ENCODE measurements at regions of chr1 and their contacts with region 1.

Region 1: DNA sequence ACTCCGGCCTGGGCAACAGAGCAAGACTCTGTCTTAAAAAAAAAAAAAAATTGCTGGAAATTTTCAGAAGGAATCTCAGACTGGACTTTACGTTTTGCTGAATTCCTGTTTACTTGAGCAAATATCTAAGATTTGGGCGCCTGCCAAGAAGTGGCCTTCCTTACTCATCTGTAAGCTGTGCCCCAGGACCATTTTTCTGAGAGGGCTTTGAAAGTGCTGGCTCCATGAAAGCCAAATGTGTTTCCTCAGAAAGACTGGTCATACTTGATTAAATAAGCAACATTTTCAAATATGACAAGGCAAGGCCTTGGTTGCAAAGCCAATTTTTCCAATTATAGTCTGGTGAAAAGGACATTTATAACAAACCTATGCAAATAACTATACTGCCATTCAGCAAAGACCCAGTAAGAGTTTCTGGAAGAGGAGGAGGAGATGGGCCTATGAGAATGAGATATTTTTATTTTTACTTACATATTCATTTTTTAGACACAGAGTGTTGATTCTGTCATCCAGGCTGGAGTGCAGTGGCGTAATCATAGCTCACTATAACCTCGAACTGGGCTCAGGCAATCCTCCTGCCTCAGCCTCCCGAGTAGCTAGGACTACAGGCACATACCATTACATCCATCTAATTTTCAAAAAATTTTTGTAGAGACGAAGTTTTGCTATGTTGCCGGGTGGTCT is 56.3 kb upstream of the HTR1D start:
- DNase-seq: no peak
- ATAC-seq: no peak
- H3K4me3 ChIP-seq: no peak overlapping the region
- H3K27ac ChIP-seq: no peak overlapping the region
- H3K4me1 ChIP-seq: no peaks in the 10 kb centered on the region
- H3K27me3 ChIP-seq: peaks cover 0 to 2% (median 0%) of the 10 kb centered on the region in 9 donors
- CTCF ChIP-seq: no peak
- POLR2A ChIP-seq: no peak

Region 2: DNA sequence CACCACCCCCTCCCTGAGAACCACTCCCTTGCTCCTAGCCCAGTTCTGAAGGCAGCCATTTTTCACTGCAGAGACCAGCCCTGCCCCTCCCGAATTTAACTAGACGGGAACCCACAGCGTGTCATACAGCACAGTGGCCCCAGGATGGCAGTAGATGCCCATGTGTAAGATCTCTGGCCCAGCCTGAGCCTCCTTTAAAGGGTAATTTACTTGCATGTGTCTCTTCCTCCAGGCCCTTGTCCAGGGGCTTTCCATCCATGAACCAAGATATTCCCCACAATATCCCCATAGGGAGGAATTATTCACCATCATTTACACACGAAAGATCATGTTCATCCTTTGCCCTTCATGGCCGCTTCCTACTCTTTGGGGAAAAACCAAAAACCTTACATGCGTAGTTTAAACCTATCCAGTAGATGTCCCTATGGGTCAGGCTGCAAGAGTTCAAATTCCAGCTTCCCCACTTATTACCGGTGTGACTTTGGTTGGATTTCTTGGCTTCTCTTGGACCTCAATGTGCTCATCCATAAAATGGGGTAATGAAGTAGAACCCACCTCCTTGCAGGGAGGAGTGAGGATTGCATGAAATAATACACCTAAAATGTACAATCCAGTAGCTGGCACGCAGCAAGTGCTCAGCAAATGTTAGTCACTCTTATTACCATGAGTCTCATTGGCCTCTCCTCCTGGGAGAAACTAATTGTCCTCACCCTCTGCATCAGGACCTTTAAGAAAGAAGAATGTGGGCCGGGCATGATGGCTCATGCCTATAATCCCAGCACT is 296.9 kb before region 1 on chr1:
- intact Hi-C with region 1: loop called in 5 of 10 experiments (anchors 10 kb)
- DNase-seq: peak in 4 of 5 donors; percentile 35 to 55 (median 47)
- ATAC-seq: peak; percentile 79 to 96 (median 94)
- H3K4me3 ChIP-seq: no peak overlapping the region
- H3K27ac ChIP-seq: no peak overlapping the region
- H3K4me1 ChIP-seq: no peaks in the 10 kb centered on the region
- H3K27me3 ChIP-seq: peaks cover 0 to 16% (median 6%) of the 10 kb centered on the region in 9 donors
- CTCF ChIP-seq: peak; percentile 37 to 68 (median 64)
- POLR2A ChIP-seq: no peak

Region 3: GRCh38 chr1:22983934-22984333 is 289.7 kb before region 1 on chr1:
- intact Hi-C with region 1: loop called in 5 of 10 experiments (anchors 10 kb)
- DNase-seq: no peak
- ATAC-seq: no peak
- H3K4me3 ChIP-seq: no peak overlapping the region
- H3K27ac ChIP-seq: no peak overlapping the region
- H3K4me1 ChIP-seq: no peaks in the 10 kb centered on the region
- H3K27me3 ChIP-seq: peaks cover 0 to 4% (median 0%) of the 10 kb centered on the region in 9 donors
- CTCF ChIP-seq: no peak
- POLR2A ChIP-seq: no peak

Region 4: DNA sequence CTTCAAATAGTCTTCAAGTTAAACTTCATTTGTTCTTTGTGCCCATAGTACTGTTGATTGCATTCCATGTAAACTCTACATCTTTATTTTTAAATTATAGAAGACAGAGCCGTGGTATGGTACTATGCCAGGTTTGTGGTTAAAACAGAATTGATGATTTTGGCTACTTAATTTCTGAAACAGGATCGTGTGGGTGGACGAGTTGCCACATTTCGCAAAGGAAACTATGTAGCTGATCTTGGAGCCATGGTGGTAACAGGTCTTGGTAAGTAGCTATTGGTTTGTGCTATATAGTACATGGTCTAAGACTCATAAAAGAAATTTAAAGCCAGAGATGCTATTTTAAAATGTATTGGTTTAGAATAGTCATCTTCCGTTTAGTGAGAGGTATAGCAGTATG is 216.3 kb before region 1 on chr1:
- intact Hi-C with region 1: no loop called
- DNase-seq: no peak
- ATAC-seq: no peak
- H3K4me3 ChIP-seq: no peak overlapping the region
- H3K27ac ChIP-seq: no peak overlapping the region
- H3K4me1 ChIP-seq: no peaks in the 10 kb centered on the region
- H3K27me3 ChIP-seq: no peaks in the 10 kb centered on the region
- CTCF ChIP-seq: no peak
- POLR2A ChIP-seq: no peak

Region 5: DNA sequence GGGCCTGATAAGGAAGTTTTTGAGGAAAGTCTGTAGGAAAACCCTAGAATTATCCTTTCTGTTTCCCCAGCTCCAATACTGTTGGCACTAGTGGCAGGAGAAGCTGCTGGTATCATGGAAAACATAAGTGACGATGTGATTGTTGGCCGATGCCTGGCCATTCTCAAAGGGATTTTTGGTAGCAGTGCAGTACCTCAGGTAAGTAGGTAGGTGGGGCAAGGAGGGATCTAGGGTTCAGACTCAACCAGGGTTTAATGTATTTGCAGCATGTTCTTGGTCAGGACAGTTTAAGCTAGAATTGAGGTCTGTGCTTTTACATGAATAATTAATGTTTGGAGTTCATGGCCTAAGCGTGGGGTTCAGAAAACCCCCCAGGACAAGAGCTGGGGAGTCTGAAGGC is 192.2 kb before region 1 on chr1:
- intact Hi-C with region 1: loop called in 1 of 10 experiments (anchors 10 kb)
- DNase-seq: no peak
- ATAC-seq: no peak
- H3K4me3 ChIP-seq: no peak overlapping the region
- H3K27ac ChIP-seq: no peak overlapping the region
- H3K4me1 ChIP-seq: peaks cover 0 to 16% (median 8%) of the 10 kb centered on the region in 12 donors
- H3K27me3 ChIP-seq: no peaks in the 10 kb centered on the region
- CTCF ChIP-seq: peak in 2 of 12 donors; percentile 11 to 22
- POLR2A ChIP-seq: no peak

Region 6: DNA sequence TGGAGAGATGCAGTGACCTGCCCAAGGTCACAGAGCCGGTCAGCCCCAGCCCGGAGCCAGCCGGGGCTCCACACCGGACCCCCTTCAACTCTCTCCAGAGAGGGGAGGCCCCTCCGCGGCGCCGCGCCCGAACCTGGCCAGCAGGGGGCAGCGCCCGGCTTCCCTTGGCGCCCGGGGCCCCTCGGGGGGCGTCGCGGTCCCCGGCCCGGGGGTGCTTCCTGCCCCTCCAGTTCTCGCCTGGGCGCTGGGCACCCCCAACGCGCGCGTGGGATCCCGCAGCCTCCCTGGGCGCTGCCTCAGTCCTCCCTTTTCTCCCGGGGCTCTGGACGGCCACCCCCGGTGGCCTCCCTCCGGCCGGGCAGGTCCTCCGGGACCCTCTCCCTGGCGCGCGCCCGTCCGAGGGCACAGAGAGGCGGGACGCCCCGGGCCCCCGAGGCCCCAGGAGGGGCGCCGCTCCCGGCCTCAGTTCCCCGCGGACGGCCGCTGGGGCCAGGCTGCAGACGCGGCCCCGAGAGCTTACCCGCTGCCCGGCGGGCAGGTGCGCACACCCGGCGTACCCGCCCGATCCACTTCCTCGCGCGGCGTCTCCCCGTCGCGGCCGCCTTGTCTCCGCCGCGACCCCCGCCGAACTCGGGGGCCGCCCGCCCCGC is 56.7 kb before region 1 on chr1:
- intact Hi-C with region 1: loop called in 5 of 10 experiments (anchors 5 to 10 kb)
- DNase-seq: no peak
- ATAC-seq: peak in 1 of 4 donors; percentile 43
- H3K4me3 ChIP-seq: peak overlapping the region in 11 of 12 donors; percentile 23 to 54 (median 48)
- H3K27ac ChIP-seq: no peak overlapping the region
- H3K4me1 ChIP-seq: peaks cover 0 to 16% (median 10%) of the 10 kb centered on the region in 12 donors
- H3K27me3 ChIP-seq: peaks cover 18 to 63% (median 39%) of the 10 kb centered on the region in 9 donors
- CTCF ChIP-seq: peak; percentile 46 to 74 (median 64)
- POLR2A ChIP-seq: no peak

Region 7: GRCh38 chr1:23224714-23225648 is 48.6 kb before region 1 on chr1:
- intact Hi-C with region 1: loop called in 2 of 10 experiments (anchors 5 kb)
- DNase-seq: peak in 4 of 5 donors; percentile 33 to 58 (median 55)
- ATAC-seq: peak; percentile 51 to 88 (median 80)
- H3K4me3 ChIP-seq: peak overlapping the region in 1 of 12 donors; percentile 18
- H3K27ac ChIP-seq: peak overlapping the region in 8 of 12 donors; percentile 24 to 65 (median 40)
- H3K4me1 ChIP-seq: peaks cover 0 to 15% (median 7%) of the 10 kb centered on the region in 12 donors
- H3K27me3 ChIP-seq: peaks cover 0 to 9% (median 0%) of the 10 kb centered on the region in 9 donors
- CTCF ChIP-seq: no peak
- POLR2A ChIP-seq: no peak